Calu3 (cell line): ENCODE measurements at regions of chr4 and their contacts with region 1.

Region 1: DNA sequence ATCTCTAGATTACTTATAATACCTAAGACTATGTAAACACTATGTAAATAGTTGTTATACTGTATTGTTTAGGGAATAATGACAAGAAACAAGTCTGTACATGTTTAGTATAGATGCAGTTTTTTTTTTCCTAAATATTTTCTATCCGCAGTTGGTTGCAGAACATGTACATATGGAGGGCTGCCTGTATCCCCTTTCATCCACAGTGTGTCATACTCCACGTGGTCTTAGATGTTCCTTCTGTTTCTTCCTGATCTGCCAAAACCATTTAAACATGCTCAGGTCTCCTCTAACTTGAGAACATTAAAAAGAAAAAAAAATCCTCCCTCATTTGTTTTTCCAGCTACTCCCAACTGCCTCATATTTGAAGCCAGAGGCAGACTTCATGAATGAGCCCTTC is 14.0 kb downstream of the OCIAD1 start:
- DNase-seq: no peak
- H3K4me3 Mint-ChIP-seq: no peak overlapping the region
- H3K27ac Mint-ChIP-seq: no peak overlapping the region
- H3K4me1 Mint-ChIP-seq: no peaks in the 10 kb centered on the region
- H3K27me3 Mint-ChIP-seq: no peaks in the 10 kb centered on the region
- CTCF ChIP-seq: no peak

Region 2: GRCh38 chr4:48360285-48361010 is 484.4 kb before region 1 on chr4:
- CTCF ChIA-PET with region 1: no interaction called
- intact Hi-C with region 1: no loop called
- DNase-seq: no peak
- H3K4me3 Mint-ChIP-seq: no peak overlapping the region
- H3K27ac Mint-ChIP-seq: no peak overlapping the region
- H3K4me1 Mint-ChIP-seq: no peaks in the 10 kb centered on the region
- H3K27me3 Mint-ChIP-seq: no peaks in the 10 kb centered on the region
- CTCF ChIP-seq: no peak

Region 3: DNA sequence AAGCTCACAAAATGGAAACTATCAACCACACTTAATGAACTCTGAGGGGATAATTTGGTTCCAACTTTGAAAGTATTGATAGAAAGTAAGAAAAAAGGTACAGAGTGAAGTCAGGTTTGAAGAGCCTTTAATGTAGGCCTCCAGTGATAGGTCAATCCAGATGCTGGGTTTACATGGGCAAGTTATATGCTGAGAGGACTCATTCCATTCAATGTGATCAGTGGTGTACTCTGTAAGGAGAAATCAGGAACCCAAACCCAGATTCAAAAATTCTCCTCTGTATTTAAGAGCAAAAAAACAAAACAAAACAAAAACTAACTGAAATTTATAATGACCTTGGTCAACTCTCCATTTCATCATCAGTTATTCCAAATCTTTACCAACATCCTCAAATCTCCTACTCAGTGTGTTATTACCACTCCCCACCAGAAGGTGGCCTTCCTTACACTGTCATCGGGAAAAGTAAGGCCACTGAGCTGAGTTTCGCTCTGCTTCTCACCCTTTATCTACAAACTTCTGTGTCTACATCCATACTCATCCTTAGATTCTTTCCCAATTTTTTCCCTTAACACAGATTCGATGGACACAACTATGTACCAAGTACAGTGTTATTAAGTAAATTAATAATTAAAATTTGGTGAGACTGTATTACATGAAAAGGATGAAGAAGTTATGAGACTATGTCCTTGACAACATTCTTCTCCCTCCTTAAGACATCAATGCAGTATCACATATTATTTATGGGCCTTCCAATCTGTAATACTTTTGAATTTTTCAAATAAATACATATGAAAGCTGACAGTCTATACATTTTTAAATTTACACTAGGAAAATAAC is 266.5 kb before region 1 on chr4:
- CTCF ChIA-PET with region 1: no interaction called
- intact Hi-C with region 1: loop called (anchors 10 kb)
- DNase-seq: peak; percentile 53
- H3K4me3 Mint-ChIP-seq: no peak overlapping the region
- H3K27ac Mint-ChIP-seq: no peak overlapping the region
- H3K4me1 Mint-ChIP-seq: no peaks in the 10 kb centered on the region
- H3K27me3 Mint-ChIP-seq: no peaks in the 10 kb centered on the region
- CTCF ChIP-seq: peak; percentile 32